Natural killer cell (primary cell): ENCODE measurements at regions of chr5 and their contacts with region 1.

Region 1: DNA sequence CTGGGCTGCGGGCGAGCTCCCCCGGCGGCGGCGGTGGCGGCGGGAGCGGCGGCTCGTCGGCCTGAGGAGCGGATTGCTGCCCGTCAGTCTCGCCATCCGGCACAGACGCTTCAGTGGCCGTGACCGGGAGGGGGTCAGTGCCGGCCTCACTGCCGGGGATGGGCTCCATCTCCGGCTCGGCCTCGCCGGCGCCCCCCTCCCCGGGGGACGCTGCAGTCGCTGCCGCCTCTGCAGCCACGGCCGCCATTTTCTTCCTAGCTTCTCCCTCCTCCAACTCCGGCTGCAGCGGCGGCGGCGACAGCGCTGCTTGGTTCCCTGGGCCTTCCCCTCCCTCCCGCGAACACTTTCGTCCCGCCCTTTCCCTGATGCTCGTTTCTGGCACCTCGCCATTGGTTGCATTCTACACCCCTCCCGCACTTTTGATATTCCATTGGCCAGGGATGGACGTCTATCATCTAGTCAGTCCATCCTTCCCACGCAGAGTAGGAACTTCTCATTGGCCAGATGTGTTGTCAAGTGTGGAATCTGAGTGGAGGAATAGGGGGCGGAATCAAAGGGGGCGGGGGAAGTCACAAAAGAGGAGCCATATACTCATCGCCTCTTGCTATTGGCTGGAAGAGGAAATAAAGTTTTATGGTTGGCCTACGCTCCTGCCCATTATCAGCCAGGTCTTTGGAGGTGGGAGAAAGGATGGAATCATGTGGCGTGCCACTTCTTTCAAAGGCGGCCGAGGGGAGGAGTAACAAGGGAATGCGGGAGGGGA is at the start of gene PWWP2A:
- DNase-seq: peak; percentile 89 to 100
- ATAC-seq: peak; percentile 90 to 98 (median 91)
- H3K4me3 ChIP-seq: peak within 1 kb of the TSS; percentile 77
- H3K4me3 Mint-ChIP-seq: peak within 1 kb of the TSS; percentile 94
- H3K27ac ChIP-seq: peak within 1 kb of the TSS; percentile 78
- H3K27ac Mint-ChIP-seq: peak within 1 kb of the TSS; percentile 90 to 93
- H3K4me1 ChIP-seq: peaks cover 12% of the 10 kb centered on the region
- H3K4me1 Mint-ChIP-seq: peaks cover 15 to 24% of the 10 kb centered on the region in 2 donors
- H3K27me3 ChIP-seq: no peaks in the 10 kb centered on the region
- H3K27me3 Mint-ChIP-seq: peaks cover 0 to 10% of the 10 kb centered on the region in 2 donors
- CTCF ChIP-seq: no peak
- total RNA-seq, gene PWWP2A: 24.9 to 37.6 (median 30.2) TPM

Region 2: DNA sequence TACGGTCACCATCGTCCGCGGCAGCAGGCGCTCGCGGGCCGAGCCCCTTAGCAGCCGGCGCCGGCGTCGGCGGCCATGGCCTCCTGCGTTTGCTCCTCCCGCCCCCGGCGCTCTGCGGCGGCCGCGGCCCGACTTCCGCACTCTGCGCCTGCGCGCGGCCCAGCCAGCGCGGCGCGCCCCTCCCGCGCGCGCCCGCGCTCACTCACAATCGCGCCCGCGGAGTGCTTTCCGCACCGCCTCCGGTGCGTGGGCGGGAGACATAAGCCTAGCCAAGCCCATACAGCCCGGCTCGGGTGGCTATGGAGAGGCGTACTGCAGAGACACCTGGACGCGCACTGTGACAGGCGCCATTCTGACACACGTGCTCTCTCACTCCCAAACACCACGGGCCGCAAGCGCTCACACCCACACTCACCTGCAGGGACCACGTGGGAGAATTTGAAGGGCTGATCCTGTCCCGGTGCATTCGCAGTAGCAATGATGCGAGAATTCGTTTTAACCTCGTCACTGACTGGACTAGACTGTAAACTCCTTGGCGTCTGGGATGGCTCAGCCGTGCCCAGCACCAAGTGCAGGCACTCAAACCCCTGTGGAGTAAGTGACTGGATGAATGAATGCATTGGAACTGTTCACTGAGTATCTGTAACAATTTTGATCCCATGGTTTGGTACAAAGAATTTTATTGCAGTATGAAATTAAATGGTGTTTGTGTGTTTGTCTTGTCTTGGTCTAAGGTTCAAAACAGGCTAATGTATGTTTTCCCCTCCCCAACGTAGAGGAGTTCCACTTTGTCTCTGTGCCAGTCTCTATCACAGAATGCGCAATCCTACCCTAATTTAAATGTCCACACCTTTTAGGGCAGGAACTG is 909.7 kb before region 1 on chr5 and contains the start of gene RNF145:
- intact Hi-C with region 1: loop called (anchors 2 kb)
- DNase-seq: peak; percentile 88 to 98
- ATAC-seq: peak; percentile 76 to 91 (median 78)
- H3K4me3 ChIP-seq: peak within 1 kb of the TSS; percentile 81
- H3K4me3 Mint-ChIP-seq: peak within 1 kb of the TSS; percentile 99
- H3K27ac ChIP-seq: peak within 1 kb of the TSS; percentile 81
- H3K27ac Mint-ChIP-seq: peak within 1 kb of the TSS; percentile 95 to 98
- H3K4me1 ChIP-seq: peaks cover 9% of the 10 kb centered on the region
- H3K4me1 Mint-ChIP-seq: peaks cover 42 to 46% of the 10 kb centered on the region in 2 donors
- H3K27me3 ChIP-seq: no peaks in the 10 kb centered on the region
- H3K27me3 Mint-ChIP-seq: peaks cover 6 to 25% of the 10 kb centered on the region in 2 donors
- CTCF ChIP-seq: no peak
- total RNA-seq, gene RNF145: 29.8 to 40.4 (median 38.4) TPM

Region 3: GRCh38 chr5:160008877-160009590 is 110.3 kb before region 1 on chr5 and contains the start of gene TTC1:
- intact Hi-C with region 1: loop called (anchors 1 kb)
- DNase-seq: peak; percentile 86 to 100
- ATAC-seq: peak; percentile 97 to 99 (median 98)
- H3K4me3 ChIP-seq: peak within 1 kb of the TSS; percentile 63
- H3K4me3 Mint-ChIP-seq: peak within 1 kb of the TSS; percentile 96
- H3K27ac ChIP-seq: peak within 1 kb of the TSS; percentile 74
- H3K27ac Mint-ChIP-seq: peak within 1 kb of the TSS; percentile 92 to 94
- H3K4me1 ChIP-seq: peaks cover 18% of the 10 kb centered on the region
- H3K4me1 Mint-ChIP-seq: peaks cover 28 to 30% of the 10 kb centered on the region in 2 donors
- H3K27me3 ChIP-seq: no peaks in the 10 kb centered on the region
- H3K27me3 Mint-ChIP-seq: peaks cover 3 to 5% of the 10 kb centered on the region in 2 donors
- CTCF ChIP-seq: no peak
- total RNA-seq, gene TTC1: 28.1 to 34.9 (median 33.6) TPM

Region 4: GRCh38 chr5:160165137-160166068 is 46.1 kb after region 1 on chr5:
- intact Hi-C with region 1: no loop called
- DNase-seq: no peak
- ATAC-seq: peak in 2 of 3 donors; percentile 21 to 54
- H3K4me3 ChIP-seq: no peak overlapping the region
- H3K4me3 Mint-ChIP-seq: no peak overlapping the region
- H3K27ac ChIP-seq: no peak overlapping the region
- H3K27ac Mint-ChIP-seq: no peak overlapping the region
- H3K4me1 ChIP-seq: peaks cover 9% of the 10 kb centered on the region
- H3K4me1 Mint-ChIP-seq: peaks cover 14 to 15% of the 10 kb centered on the region in 2 donors
- H3K27me3 ChIP-seq: no peaks in the 10 kb centered on the region
- H3K27me3 Mint-ChIP-seq: peaks cover 14 to 15% of the 10 kb centered on the region in 2 donors
- CTCF ChIP-seq: no peak

Region 5: GRCh38 chr5:160467555-160468362 is 348.4 kb after region 1 on chr5:
- intact Hi-C with region 1: loop called (anchors 1 kb)
- DNase-seq: peak; percentile 79 to 89
- ATAC-seq: peak; percentile 84 to 94 (median 93)
- H3K4me3 ChIP-seq: peak overlapping the region; percentile 37
- H3K4me3 Mint-ChIP-seq: peak overlapping the region; percentile 93
- H3K27ac ChIP-seq: peak overlapping the region; percentile 60
- H3K27ac Mint-ChIP-seq: peak overlapping the region; percentile 89 to 92
- H3K4me1 ChIP-seq: peaks cover 41% of the 10 kb centered on the region
- H3K4me1 Mint-ChIP-seq: peaks cover 59 to 63% of the 10 kb centered on the region in 2 donors
- H3K27me3 ChIP-seq: no peaks in the 10 kb centered on the region
- H3K27me3 Mint-ChIP-seq: no peaks in the 10 kb centered on the region
- CTCF ChIP-seq: no peak